ENCODE measurements at regions of chr13 and their contacts with region 1.

Region 1: DNA sequence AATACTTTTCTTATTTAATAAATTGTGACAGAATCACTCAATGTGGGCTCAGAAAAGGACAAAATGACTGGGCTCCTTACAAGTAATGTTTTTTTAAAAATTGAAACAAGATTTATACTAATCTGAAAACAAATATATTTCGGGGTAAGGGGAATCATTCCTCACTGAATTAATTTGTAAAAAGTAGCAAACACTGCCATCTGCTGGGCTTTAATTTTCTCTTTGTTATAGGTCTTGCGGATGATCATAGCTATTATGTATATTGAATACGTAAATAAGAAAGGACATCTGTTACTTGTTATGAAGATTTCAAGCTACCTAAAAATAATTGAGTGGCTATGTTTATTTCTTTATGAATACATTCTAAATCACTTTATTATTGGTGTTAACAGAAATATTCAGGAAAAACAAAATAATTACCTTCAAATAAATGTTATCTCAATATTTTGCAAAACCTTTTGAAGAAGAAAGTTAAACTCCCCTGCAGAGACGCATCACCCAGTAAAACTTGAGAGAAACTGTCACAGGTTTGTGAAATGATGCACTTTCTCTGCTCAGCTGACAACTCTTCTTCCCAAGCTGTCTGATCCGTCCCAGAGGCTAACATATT is 17.8 kb upstream of the ENOX1 start:
- DNase-seq: peak; percentile 66
- H3K4me3 ChIP-seq: no peak overlapping the region
- H3K27ac ChIP-seq: no peak overlapping the region
- H3K4me1 ChIP-seq: no peaks in the 10 kb centered on the region
- H3K27me3 ChIP-seq: no peaks in the 10 kb centered on the region
- CTCF ChIP-seq: peak; percentile 53 to 80 (median 74)
- POLR2A ChIP-seq: no peak

Region 2: GRCh38 chr13:42594970-42595571 is 1209.5 kb before region 1 on chr13:
- intact Hi-C with region 1: loop called (anchors 10 kb)
- DNase-seq: peak; percentile 46
- H3K4me3 ChIP-seq: no peak overlapping the region
- H3K27ac ChIP-seq: no peak overlapping the region
- H3K4me1 ChIP-seq: no peaks in the 10 kb centered on the region
- H3K27me3 ChIP-seq: no peaks in the 10 kb centered on the region
- CTCF ChIP-seq: peak; percentile 62 to 78 (median 66)
- POLR2A ChIP-seq: no peak

Region 3: DNA sequence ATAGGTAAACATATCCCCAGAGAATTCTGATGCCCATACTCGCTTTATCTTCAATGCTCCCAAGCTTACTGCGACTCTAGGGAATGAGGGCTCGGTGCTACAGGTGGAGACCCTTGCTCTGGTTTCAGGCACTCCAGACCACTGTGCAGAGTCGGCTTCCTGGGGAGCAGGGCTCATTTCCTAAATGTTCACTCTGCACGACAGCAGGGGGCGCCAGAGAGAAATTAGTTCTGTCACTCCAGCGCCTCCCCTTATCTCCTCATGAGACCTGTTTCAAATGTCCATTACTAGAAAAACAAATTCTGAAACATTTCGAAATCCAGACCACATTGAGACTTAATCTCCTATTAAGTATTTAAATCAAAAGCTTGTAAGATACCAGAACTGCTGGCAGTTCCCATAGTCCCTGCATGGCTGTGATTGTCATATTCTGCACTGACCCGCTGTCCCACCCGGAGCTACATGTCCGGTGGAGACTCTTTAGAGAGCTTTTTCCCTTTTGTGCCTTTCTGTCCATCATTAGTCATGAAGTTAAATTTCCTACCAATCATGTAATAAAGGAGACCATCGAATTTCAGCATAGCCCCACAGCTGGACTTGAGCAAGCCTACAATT is 834.9 kb before region 1 on chr13:
- intact Hi-C with region 1: loop called (anchors 5 kb)
- DNase-seq: peak; percentile 30
- H3K4me3 ChIP-seq: no peak overlapping the region
- H3K27ac ChIP-seq: peak overlapping the region; percentile 30 to 70
- H3K4me1 ChIP-seq: peaks cover 6% of the 10 kb centered on the region
- H3K27me3 ChIP-seq: no peaks in the 10 kb centered on the region
- CTCF ChIP-seq: peak; percentile 37 to 64 (median 52)
- POLR2A ChIP-seq: no peak

Region 4: DNA sequence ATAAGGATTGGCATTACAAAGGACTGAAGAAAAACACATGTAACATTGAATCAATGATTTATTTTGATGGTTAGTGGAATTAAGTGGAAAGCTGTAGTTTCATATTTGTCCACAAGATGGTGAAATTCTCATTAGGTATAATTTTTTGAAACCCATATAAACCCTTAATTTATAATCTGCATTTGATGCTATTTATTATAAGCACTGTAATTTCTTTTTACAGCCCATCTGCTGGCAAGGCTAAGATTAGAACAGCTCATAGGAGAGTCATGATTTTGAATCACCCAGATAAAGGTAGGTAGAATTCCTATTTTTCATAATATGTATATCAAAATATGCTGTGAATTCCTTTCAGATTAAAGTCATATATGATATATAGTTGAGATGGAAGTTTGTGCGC is 719.0 kb before region 1 on chr13:
- intact Hi-C with region 1: loop called (anchors 5 kb)
- DNase-seq: no peak
- H3K4me3 ChIP-seq: no peak overlapping the region
- H3K27ac ChIP-seq: no peak overlapping the region
- H3K4me1 ChIP-seq: no peaks in the 10 kb centered on the region
- H3K27me3 ChIP-seq: no peaks in the 10 kb centered on the region
- CTCF ChIP-seq: peak; percentile 61 to 77 (median 71)
- POLR2A ChIP-seq: no peak